ENCODE measurements at regions of chr16 and their contacts with region 1.

Region 1: DNA sequence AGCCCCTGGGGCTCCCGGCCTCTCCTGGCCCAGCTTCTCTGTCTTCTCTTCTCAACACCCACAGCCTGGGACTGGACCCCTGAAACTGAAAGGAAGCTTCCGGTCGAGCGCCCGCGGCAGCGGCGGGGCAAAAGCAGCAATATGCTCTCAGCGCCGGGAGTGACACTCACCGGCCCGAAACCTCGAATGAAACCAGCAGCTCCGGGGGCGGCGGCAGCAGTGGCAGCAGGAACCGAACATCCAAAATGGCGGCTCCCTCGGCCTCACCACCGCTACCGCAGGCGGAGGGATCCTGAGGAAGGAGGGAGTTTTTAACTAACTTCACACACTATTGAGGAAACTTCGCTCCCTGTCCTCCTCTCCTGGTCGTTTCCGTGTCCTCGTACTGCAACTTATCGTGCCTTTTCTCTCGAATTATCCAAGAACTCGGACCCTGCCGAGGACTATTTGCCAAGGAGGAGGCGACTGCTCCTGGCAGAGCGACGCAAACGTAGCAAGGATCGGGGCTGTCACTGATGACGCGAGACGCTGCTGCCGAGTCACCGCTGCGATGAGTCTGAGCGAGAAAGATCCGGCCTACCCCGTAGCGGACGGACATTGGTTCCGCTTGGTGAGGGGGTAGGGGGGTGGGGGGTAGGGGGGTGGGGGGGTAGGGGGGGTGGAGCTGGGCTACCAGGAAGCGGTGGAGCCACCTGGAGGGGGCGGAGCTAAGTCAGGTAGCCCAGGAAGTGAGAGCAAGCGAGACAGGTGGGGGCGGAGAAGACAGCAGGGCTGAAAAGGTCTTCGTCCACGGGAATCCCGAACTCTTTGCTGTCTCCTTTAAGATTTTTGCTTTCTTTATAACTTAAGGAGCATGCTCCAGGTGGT is at the start of gene AP1G1:
- DNase-seq: peak; percentile 97
- H3K4me3 Mint-ChIP-seq: peak within 1 kb of the TSS; percentile 84
- H3K27ac Mint-ChIP-seq: peak within 1 kb of the TSS; percentile 100
- H3K4me1 Mint-ChIP-seq: no peaks in the 10 kb centered on the region
- H3K27me3 Mint-ChIP-seq: no peaks in the 10 kb centered on the region
- CTCF ChIP-seq: no peak
- total RNA-seq, gene AP1G1: 99.5 and 100 TPM in 2 replicates

Region 2: GRCh38 chr16:71788578-71788977 is 20.2 kb before region 1 on chr16:
- CTCF ChIA-PET with region 1: interaction called, 6 read pairs
- POLR2A ChIA-PET with region 1: interaction called, 33 read pairs
- intact Hi-C with region 1: no loop called
- DNase-seq: no peak
- H3K4me3 Mint-ChIP-seq: no peak overlapping the region
- H3K27ac Mint-ChIP-seq: no peak overlapping the region
- H3K4me1 Mint-ChIP-seq: no peaks in the 10 kb centered on the region
- H3K27me3 Mint-ChIP-seq: no peaks in the 10 kb centered on the region
- CTCF ChIP-seq: no peak

Region 3: DNA sequence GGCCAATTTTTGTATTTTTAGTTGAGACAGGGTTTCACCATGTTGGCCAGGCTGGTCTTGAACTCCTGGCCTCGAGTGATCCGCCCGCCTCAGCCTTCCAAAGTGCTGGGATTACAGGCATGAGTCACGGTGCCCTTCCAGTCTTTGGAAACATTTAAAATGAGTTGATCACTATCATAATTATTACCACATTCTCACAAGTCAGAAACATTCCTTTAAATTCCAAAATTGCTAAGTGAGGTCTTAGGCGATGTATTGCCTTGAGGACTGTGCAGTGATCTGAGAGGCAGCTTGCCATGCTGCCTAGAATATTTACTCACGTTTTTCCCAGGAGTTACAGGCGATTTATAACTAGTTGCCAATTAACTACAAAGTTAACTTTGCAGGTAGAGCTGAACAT is 31.2 kb after region 1 on chr16:
- CTCF ChIA-PET with region 1: interaction called, 3 read pairs
- POLR2A ChIA-PET with region 1: interaction called, 60 read pairs
- intact Hi-C with region 1: loop called (anchors 2 kb)
- DNase-seq: no peak
- H3K4me3 Mint-ChIP-seq: no peak overlapping the region
- H3K27ac Mint-ChIP-seq: no peak overlapping the region
- H3K4me1 Mint-ChIP-seq: peaks cover 2% of the 10 kb centered on the region
- H3K27me3 Mint-ChIP-seq: no peaks in the 10 kb centered on the region
- CTCF ChIP-seq: no peak

Region 4: DNA sequence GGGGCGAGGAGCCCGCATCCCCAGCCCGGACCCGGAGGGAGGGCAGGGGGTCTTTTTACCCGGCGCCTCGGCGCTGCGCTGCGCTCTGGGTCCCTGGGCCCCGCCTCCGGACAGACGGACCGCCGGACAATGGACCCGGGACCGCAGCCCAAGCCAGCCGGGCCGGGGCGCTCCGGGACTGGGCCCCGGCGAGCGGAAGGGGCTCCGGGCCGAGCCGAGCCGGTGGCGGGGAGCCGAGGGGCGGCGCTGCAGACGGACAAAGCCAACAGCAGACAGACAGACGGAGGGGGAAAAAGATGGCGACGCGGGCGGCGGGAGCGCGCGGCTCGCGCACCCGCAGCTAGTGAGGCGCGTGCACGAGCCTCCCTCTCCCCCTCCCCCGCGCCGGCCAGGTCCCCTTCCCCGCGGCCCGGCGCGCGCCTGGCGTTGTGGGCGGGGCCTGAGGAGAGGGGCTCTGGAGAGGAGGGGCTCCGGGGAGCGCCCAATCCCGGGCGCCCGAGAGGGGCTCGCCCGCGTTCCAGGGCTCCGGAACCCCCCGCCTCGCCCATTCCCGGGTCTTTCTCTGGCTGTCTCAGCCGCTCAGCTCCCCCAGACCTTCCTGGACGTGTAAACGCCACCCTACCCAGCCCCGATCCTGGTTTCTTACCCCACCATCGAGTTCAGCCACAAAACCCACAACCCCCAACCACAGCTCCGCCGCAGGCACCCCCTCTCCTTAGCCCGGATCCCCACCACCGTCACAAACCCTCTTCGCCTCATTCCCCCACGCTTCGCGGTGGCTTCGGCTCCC is 75.2 kb after region 1 on chr16 and contains the start of gene ZNF821:
- CTCF ChIA-PET with region 1: interaction called, 21 read pairs
- POLR2A ChIA-PET with region 1: interaction called, 66 read pairs
- intact Hi-C with region 1: no loop called
- DNase-seq: peak; percentile 56
- H3K4me3 Mint-ChIP-seq: peak within 1 kb of the TSS; percentile 86
- H3K27ac Mint-ChIP-seq: peak within 1 kb of the TSS; percentile 49
- H3K4me1 Mint-ChIP-seq: peaks cover 9% of the 10 kb centered on the region
- H3K27me3 Mint-ChIP-seq: no peaks in the 10 kb centered on the region
- CTCF ChIP-seq: peak; percentile 46
- total RNA-seq, gene ZNF821: 3.4 and 4.4 TPM in 2 replicates

Measured in MCF 10A (cell line).